ENCODE measurements at regions of chr1 and their contacts with region 1.

Region 1: DNA sequence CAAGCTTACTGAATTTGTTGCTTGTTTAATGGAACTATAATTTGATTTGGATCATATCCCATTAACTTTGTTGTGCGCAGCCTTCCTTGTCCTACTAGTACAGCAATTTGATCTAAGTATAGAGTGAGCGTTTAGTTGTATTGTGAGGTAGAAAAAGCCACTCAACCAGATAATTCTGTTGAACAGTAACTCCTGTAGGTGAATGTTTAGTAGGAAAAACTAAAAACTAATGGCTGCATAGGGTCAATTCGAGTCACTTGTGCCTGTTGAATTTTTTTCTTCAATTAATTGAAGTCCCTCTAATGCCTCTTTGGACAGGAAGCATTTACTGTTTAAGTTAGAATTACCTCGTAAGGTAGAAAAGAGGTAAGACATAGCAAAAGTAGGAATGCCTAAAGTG is 15.0 kb upstream of the EPHX1 start:
- DNase-seq: no peak
- H3K4me3 ChIP-seq: no peak overlapping the region
- H3K27ac ChIP-seq: no peak overlapping the region
- H3K4me1 ChIP-seq: no peaks in the 10 kb centered on the region
- H3K27me3 ChIP-seq: no peaks in the 10 kb centered on the region
- CTCF ChIP-seq: no peak
- POLR2A ChIP-seq: no peak

Region 2: GRCh38 chr1:224774378-224774777 is 1020.6 kb before region 1 on chr1:
- intact Hi-C with region 1: no loop called
- DNase-seq: no peak
- H3K4me3 ChIP-seq: no peak overlapping the region
- H3K27ac ChIP-seq: no peak overlapping the region
- H3K4me1 ChIP-seq: no peaks in the 10 kb centered on the region
- H3K27me3 ChIP-seq: no peaks in the 10 kb centered on the region
- CTCF ChIP-seq: no peak
- POLR2A ChIP-seq: no peak

Region 3: GRCh38 chr1:225855503-225856300 is 60.7 kb after region 1 on chr1:
- intact Hi-C with region 1: loop called (anchors 2 kb)
- DNase-seq: no peak
- H3K4me3 ChIP-seq: no peak overlapping the region
- H3K27ac ChIP-seq: no peak overlapping the region
- H3K4me1 ChIP-seq: no peaks in the 10 kb centered on the region
- H3K27me3 ChIP-seq: no peaks in the 10 kb centered on the region
- CTCF ChIP-seq: no peak
- POLR2A ChIP-seq: no peak

Measured in breast epithelium (tissue), 4 donors.